Endothelial cell of umbilical vein (primary cell): ENCODE measurements at regions of chr22 and their contacts with region 1.

Region 1: GRCh38 chr22:22371031-22371541 is 126.5 kb downstream of the VPREB1 start:
- DNase-seq: no peak
- H3K4me3 ChIP-seq: no peak overlapping the region
- H3K27ac ChIP-seq: no peak overlapping the region
- H3K4me1 ChIP-seq: no peaks in the 10 kb centered on the region
- H3K27me3 ChIP-seq: peaks cover 14 to 21% of the 10 kb centered on the region in 2 experiments
- CTCF ChIP-seq: no peak
- POLR2A ChIP-seq: no peak

Region 2: GRCh38 chr22:22348127-22348814 is 22.8 kb before region 1 on chr22:
- CTCF ChIA-PET with region 1: interaction called, 6 read pairs
- POLR2A ChIA-PET with region 1: no interaction called
- dilution Hi-C with region 1: no loop called
- intact Hi-C with region 1: loop called (anchors 1 kb)
- DNase-seq: no peak
- H3K4me3 ChIP-seq: no peak overlapping the region
- H3K27ac ChIP-seq: no peak overlapping the region
- H3K4me1 ChIP-seq: no peaks in the 10 kb centered on the region
- H3K27me3 ChIP-seq: peaks cover 11 to 17% of the 10 kb centered on the region in 2 experiments
- CTCF ChIP-seq: peak in 1 of 2 donors; percentile 23
- POLR2A ChIP-seq: no peak

Region 3: GRCh38 chr22:22386602-22387385 is 15.7 kb after region 1 on chr22:
- CTCF ChIA-PET with region 1: no interaction called
- POLR2A ChIA-PET with region 1: no interaction called
- dilution Hi-C with region 1: no loop called
- intact Hi-C with region 1: no loop called
- DNase-seq: no peak
- H3K4me3 ChIP-seq: no peak overlapping the region
- H3K27ac ChIP-seq: no peak overlapping the region
- H3K4me1 ChIP-seq: no peaks in the 10 kb centered on the region
- H3K27me3 ChIP-seq: peaks cover 0 to 12% of the 10 kb centered on the region in 2 experiments
- CTCF ChIP-seq: no peak
- POLR2A ChIP-seq: no peak

Region 4: GRCh38 chr22:22408731-22409696 is 37.9 kb after region 1 on chr22:
- CTCF ChIA-PET with region 1: no interaction called
- POLR2A ChIA-PET with region 1: no interaction called
- dilution Hi-C with region 1: no loop called
- intact Hi-C with region 1: loop called (anchors 1 kb)
- DNase-seq: no peak
- H3K4me3 ChIP-seq: no peak overlapping the region
- H3K27ac ChIP-seq: no peak overlapping the region
- H3K4me1 ChIP-seq: no peaks in the 10 kb centered on the region
- H3K27me3 ChIP-seq: peaks cover 13 to 14% of the 10 kb centered on the region in 2 experiments
- CTCF ChIP-seq: peak in 1 of 2 donors; percentile 55
- POLR2A ChIP-seq: no peak

Region 5: GRCh38 chr22:22546490-22546889 is 175.4 kb after region 1 on chr22:
- CTCF ChIA-PET with region 1: no interaction called
- POLR2A ChIA-PET with region 1: no interaction called
- dilution Hi-C with region 1: no loop called
- intact Hi-C with region 1: no loop called
- DNase-seq: no peak
- H3K4me3 ChIP-seq: no peak overlapping the region
- H3K27ac ChIP-seq: no peak overlapping the region
- H3K4me1 ChIP-seq: no peaks in the 10 kb centered on the region
- H3K27me3 ChIP-seq: peaks cover 2 to 7% of the 10 kb centered on the region in 2 experiments
- CTCF ChIP-seq: no peak
- POLR2A ChIP-seq: no peak